Heart left ventricle (tissue), 16 donors: ENCODE measurements at regions of chr7 and their contacts with region 1.

Region 1: GRCh38 chr7:106659963-106660861 is 746 bp downstream of the CCDC71L start:
- DNase-seq: peak; percentile 73 to 90 (median 76)
- ATAC-seq: peak; percentile 28 to 78 (median 65)
- H3K4me3 ChIP-seq: peak overlapping the region; percentile 78 to 93 (median 85)
- H3K27ac ChIP-seq: peak overlapping the region; percentile 92 to 97 (median 95)
- H3K4me1 ChIP-seq: peaks cover 0 to 32% (median 17%) of the 10 kb centered on the region in 12 donors
- H3K27me3 ChIP-seq: no peaks in the 10 kb centered on the region
- CTCF ChIP-seq: peak; percentile 63 to 84 (median 73)
- POLR2A ChIP-seq: peak in 1 of 2 donors; percentile 14

Region 2: GRCh38 chr7:106542550-106543220 is 117.5 kb before region 1 on chr7:
- intact Hi-C with region 1: loop called in 3 of 10 experiments (anchors 2 to 10 kb)
- DNase-seq: peak in 3 of 5 donors; percentile 28 to 45 (median 32)
- ATAC-seq: peak; percentile 42 to 83 (median 79)
- H3K4me3 ChIP-seq: no peak overlapping the region
- H3K27ac ChIP-seq: peak overlapping the region in 4 of 12 donors; percentile 2 to 58 (median 26)
- H3K4me1 ChIP-seq: peaks cover 0 to 15% (median 0%) of the 10 kb centered on the region in 12 donors
- H3K27me3 ChIP-seq: no peaks in the 10 kb centered on the region
- CTCF ChIP-seq: peak; percentile 32 to 70 (median 57)
- POLR2A ChIP-seq: no peak

Region 3: GRCh38 chr7:106604303-106604923 is 55.8 kb before region 1 on chr7:
- intact Hi-C with region 1: loop called in 1 of 10 experiments (anchors 5 kb)
- DNase-seq: no peak
- ATAC-seq: no peak
- H3K4me3 ChIP-seq: no peak overlapping the region
- H3K27ac ChIP-seq: no peak overlapping the region
- H3K4me1 ChIP-seq: no peaks in the 10 kb centered on the region
- H3K27me3 ChIP-seq: no peaks in the 10 kb centered on the region
- CTCF ChIP-seq: no peak
- POLR2A ChIP-seq: no peak

Region 4: DNA sequence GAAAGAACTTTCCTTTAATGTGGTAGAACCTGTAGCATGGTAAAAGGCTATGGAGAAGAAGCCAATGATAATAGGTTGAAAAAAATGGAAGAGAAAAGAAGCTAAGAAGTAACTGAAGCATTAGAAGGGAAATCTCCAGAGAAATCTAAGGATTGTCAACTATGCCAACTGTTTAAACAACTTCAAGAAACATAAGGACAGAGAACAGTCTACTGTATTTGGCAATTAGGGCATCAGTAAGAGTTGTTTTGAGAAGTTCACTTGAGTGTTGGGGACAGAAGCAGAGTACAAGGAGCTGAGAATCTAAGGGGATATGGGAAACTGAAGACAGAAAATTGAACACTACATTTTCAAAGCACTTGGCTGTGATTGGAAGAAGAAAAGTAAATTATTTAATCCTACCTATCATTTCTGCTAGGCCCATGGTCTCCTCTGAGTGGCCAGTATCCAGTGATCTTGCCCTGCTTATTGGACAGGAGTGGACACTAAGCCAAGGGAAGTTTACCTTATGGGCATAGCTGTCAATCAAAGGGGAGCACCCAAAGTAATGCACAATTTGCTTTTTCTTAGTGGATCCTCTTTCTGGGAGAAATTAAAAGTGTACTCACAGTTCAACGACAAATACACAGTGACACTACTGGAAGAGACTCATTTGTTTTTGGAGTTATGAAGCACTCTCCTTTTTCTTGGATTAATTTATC is 57.2 kb after region 1 on chr7:
- intact Hi-C with region 1: no loop called
- DNase-seq: no peak
- ATAC-seq: no peak
- H3K4me3 ChIP-seq: no peak overlapping the region
- H3K27ac ChIP-seq: peak overlapping the region in 4 of 12 donors; percentile 8 to 88 (median 32)
- H3K4me1 ChIP-seq: peaks cover 0 to 51% (median 5%) of the 10 kb centered on the region in 12 donors
- H3K27me3 ChIP-seq: no peaks in the 10 kb centered on the region
- CTCF ChIP-seq: no peak
- POLR2A ChIP-seq: no peak

Region 5: GRCh38 chr7:106731187-106731586 is 71.0 kb after region 1 on chr7:
- intact Hi-C with region 1: loop called in 8 of 10 experiments (anchors 1 to 5 kb)
- DNase-seq: no peak
- ATAC-seq: peak in 2 of 4 donors; percentile 36 to 45
- H3K4me3 ChIP-seq: no peak overlapping the region
- H3K27ac ChIP-seq: peak overlapping the region in 7 of 12 donors; percentile 2 to 58 (median 14)
- H3K4me1 ChIP-seq: peaks cover 0 to 36% (median 9%) of the 10 kb centered on the region in 12 donors
- H3K27me3 ChIP-seq: no peaks in the 10 kb centered on the region
- CTCF ChIP-seq: no peak
- POLR2A ChIP-seq: no peak

Region 6: DNA sequence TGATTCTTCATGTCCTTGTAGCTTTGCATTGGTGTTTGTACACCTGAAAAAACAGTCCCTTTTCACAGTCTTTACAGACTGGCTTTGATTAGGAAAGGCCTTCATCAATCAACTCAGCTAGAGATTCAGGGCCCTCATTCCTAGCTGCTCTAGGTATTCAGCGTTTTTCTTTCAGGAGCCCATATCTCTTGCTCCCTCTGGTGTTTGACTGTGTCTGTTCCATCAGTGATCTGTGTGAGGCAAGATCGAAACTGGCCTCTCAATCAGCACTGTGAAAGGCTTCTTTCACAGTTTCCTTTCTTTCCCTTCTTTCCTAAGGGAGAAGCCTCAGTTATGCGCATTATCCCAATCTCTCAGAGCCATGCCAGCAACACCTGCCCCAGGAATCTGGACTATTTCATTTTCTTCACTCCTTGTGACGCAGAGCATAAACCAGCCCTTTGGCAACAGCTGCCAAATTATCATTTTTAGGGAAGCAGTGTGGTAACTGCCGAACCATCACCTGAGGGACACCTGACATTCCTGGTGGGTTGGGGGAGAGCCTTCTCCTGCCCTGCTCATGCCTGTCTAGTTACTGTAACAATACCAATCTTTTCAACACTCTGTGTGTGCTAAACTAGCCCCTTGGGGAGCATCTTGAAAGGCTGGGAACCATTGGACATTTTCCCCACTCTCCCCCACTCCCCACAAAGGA is 76.4 kb after region 1 on chr7:
- intact Hi-C with region 1: loop called in 8 of 10 experiments (anchors 1 to 5 kb)
- DNase-seq: peak in 2 of 5 donors; percentile 20 to 21
- ATAC-seq: peak; percentile 37 to 81 (median 74)
- H3K4me3 ChIP-seq: peak overlapping the region in 1 of 12 donors; percentile 2
- H3K27ac ChIP-seq: no peak overlapping the region
- H3K4me1 ChIP-seq: peaks cover 0 to 23% (median 2%) of the 10 kb centered on the region in 12 donors
- H3K27me3 ChIP-seq: no peaks in the 10 kb centered on the region
- CTCF ChIP-seq: peak; percentile 40 to 73 (median 60)
- POLR2A ChIP-seq: no peak

Region 7: GRCh38 chr7:107150375-107151073 is 490.3 kb after region 1 on chr7:
- intact Hi-C with region 1: loop called in 1 of 10 experiments (anchors 5 kb)
- DNase-seq: peak; percentile 51 to 79 (median 66)
- ATAC-seq: peak in 3 of 4 donors; percentile 67 to 74 (median 70)
- H3K4me3 ChIP-seq: no peak overlapping the region
- H3K27ac ChIP-seq: no peak overlapping the region
- H3K4me1 ChIP-seq: peaks cover 0 to 4% (median 0%) of the 10 kb centered on the region in 12 donors
- H3K27me3 ChIP-seq: no peaks in the 10 kb centered on the region
- CTCF ChIP-seq: peak; percentile 64 to 81 (median 72)
- POLR2A ChIP-seq: no peak